ENCODE measurements at regions of chr9 and their contacts with region 1.

Region 1: GRCh38 chr9:107340920-107341632 is 58.0 kb downstream of the RAD23B start:
- DNase-seq: peak; percentile 65
- H3K4me3 Mint-ChIP-seq: no peak overlapping the region
- H3K27ac Mint-ChIP-seq: no peak overlapping the region
- H3K4me1 Mint-ChIP-seq: peaks cover 6% of the 10 kb centered on the region
- H3K27me3 Mint-ChIP-seq: no peaks in the 10 kb centered on the region

Region 2: GRCh38 chr9:106981396-106982287 is 359.4 kb before region 1 on chr9:
- intact Hi-C with region 1: no loop called
- DNase-seq: no peak
- H3K4me3 Mint-ChIP-seq: no peak overlapping the region
- H3K27ac Mint-ChIP-seq: no peak overlapping the region
- H3K4me1 Mint-ChIP-seq: no peaks in the 10 kb centered on the region
- H3K27me3 Mint-ChIP-seq: no peaks in the 10 kb centered on the region

Region 3: GRCh38 chr9:107190936-107191290 is 150.2 kb before region 1 on chr9:
- intact Hi-C with region 1: loop called (anchors 1 kb)
- DNase-seq: no peak
- H3K4me3 Mint-ChIP-seq: no peak overlapping the region
- H3K27ac Mint-ChIP-seq: no peak overlapping the region
- H3K4me1 Mint-ChIP-seq: no peaks in the 10 kb centered on the region
- H3K27me3 Mint-ChIP-seq: peaks cover 21% of the 10 kb centered on the region

Region 4: DNA sequence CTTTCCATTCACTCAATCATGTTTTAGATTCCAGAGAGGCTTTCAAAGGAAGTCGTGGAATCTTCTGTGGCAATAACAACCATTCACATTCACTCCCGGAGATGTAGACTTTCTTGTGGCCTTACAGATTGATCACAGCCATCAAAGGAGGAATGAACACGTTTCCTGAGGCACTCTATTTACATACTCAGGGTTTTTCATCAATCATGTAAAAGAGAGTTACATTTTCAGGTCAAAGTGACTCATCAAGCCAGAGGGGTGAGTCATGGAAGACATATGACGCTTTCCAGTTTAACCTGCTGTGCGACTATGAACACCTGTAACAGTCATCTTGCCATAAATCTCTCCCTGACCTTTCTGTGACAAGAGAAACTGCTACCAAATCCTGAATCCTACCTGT is 97.3 kb before region 1 on chr9:
- intact Hi-C with region 1: loop called (anchors 1 kb)
- DNase-seq: no peak
- H3K4me3 Mint-ChIP-seq: no peak overlapping the region
- H3K27ac Mint-ChIP-seq: peak overlapping the region; percentile 68
- H3K4me1 Mint-ChIP-seq: peaks cover 21% of the 10 kb centered on the region
- H3K27me3 Mint-ChIP-seq: no peaks in the 10 kb centered on the region

Measured in activated T-helper 2 cell treated with anti-CD3 and anti-CD28 coated beads, Interferon-gamma antibody, Interleukin-2, Interleukin-4, amounts not matched to agents 10 μg/mL and 5 μg/mL and 100 μg/mL, durations not matched to agents 14 hours and 24 hours and 36 hours (primary cell).